Dendritic cell treated with granulocyte-macrophage colony-stimulating factor and Interleukin-4, amounts not matched to agents 40 ng/mL and 50 ng/mL, for 4 days (primary cell): ENCODE measurements at regions of chrX and their contacts with region 1.

Region 1: GRCh38 chrX:43958529-43958928 is 14.7 kb downstream of the NDP start:
- H3K4me3 Mint-ChIP-seq: no peak overlapping the region
- H3K27ac Mint-ChIP-seq: no peak overlapping the region
- H3K4me1 Mint-ChIP-seq: peaks cover 9% of the 10 kb centered on the region
- H3K27me3 Mint-ChIP-seq: peaks cover 2% of the 10 kb centered on the region

Region 2: GRCh38 chrX:43557792-43558191 is 400.7 kb before region 1 on chrX:
- intact Hi-C with region 1: loop called (anchors 10 kb)
- H3K4me3 Mint-ChIP-seq: no peak overlapping the region
- H3K27ac Mint-ChIP-seq: no peak overlapping the region
- H3K4me1 Mint-ChIP-seq: peaks cover 12% of the 10 kb centered on the region
- H3K27me3 Mint-ChIP-seq: no peaks in the 10 kb centered on the region

Region 3: GRCh38 chrX:44025555-44025954 is 67.0 kb after region 1 on chrX:
- intact Hi-C with region 1: loop called (anchors 2 kb)
- H3K4me3 Mint-ChIP-seq: no peak overlapping the region
- H3K27ac Mint-ChIP-seq: peak overlapping the region; percentile 30
- H3K4me1 Mint-ChIP-seq: peaks cover 25% of the 10 kb centered on the region
- H3K27me3 Mint-ChIP-seq: no peaks in the 10 kb centered on the region

Region 4: GRCh38 chrX:44244008-44244407 is 285.5 kb after region 1 on chrX:
- intact Hi-C with region 1: loop called (anchors 1 kb)
- H3K4me3 Mint-ChIP-seq: no peak overlapping the region
- H3K27ac Mint-ChIP-seq: no peak overlapping the region
- H3K4me1 Mint-ChIP-seq: peaks cover 9% of the 10 kb centered on the region
- H3K27me3 Mint-ChIP-seq: peaks cover 6% of the 10 kb centered on the region

Region 5: GRCh38 chrX:44945736-44946135 is 987.2 kb after region 1 on chrX:
- intact Hi-C with region 1: loop called (anchors 5 kb)
- H3K4me3 Mint-ChIP-seq: no peak overlapping the region
- H3K27ac Mint-ChIP-seq: no peak overlapping the region
- H3K4me1 Mint-ChIP-seq: peaks cover 11% of the 10 kb centered on the region
- H3K27me3 Mint-ChIP-seq: no peaks in the 10 kb centered on the region